ENCODE measurements at regions of chr1 and their contacts with region 1.

Region 1: DNA sequence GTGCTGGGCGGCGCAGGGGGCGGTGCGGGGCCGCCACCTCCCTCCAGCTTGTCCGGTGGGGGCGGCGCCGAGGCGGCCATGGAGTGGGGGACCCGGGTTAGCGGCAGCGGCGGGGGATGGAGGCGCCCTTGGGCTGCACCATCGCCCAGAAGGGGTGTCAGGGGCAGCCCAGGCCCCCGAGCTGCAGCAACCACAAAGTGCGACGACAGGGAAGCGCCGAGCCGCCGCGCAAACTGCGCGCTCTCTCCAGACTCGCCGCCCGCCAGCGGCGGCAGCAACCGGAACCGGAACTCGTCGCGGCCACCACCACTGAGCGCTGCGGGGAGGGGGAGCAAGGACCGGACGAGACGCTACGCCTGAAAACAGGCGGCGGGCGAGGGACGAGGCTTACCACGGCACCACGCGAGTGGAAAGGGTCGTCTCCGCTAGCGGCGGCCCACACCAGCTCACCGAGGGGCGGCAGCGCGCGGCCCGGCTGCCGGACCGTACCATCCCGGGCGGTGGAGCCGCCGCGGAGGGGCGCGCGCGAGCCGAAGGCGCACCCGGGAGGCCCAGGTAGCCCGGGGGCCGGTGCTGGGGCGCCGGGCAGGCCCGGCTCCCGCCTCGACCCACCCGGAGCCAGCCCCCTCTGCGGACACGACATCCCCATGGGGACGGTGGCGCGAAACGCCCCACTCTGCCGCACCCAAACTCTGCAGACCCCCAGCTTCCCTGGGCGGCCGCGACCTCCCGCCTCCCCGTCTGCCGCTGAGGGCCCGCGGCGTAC is at the start of gene PYGO2:
- DNase-seq: peak; percentile 81
- H3K4me3 ChIP-seq: peak within 1 kb of the TSS; percentile 71 to 78 (median 74)
- H3K27ac ChIP-seq: peak within 1 kb of the TSS; percentile 82
- H3K4me1 ChIP-seq: peaks cover 28% of the 10 kb centered on the region
- H3K27me3 ChIP-seq: no peaks in the 10 kb centered on the region
- CTCF ChIP-seq: peak; percentile 35 to 65
- POLR2A ChIP-seq: peak; percentile 84
- total RNA-seq, gene PYGO2: 21.5 and 21.9 TPM in 2 replicates

Region 2: GRCh38 chr1:154982897-154983648 is 21.4 kb after region 1 on chr1 and contains the start of gene FLAD1:
- CTCF ChIA-PET with region 1: interaction called, 4 read pairs
- POLR2A ChIA-PET with region 1: no interaction called
- dilution Hi-C with region 1: no loop called
- intact Hi-C with region 1: loop called (anchors 1 kb)
- DNase-seq: peak; percentile 100
- H3K4me3 ChIP-seq: peak within 1 kb of the TSS; percentile 67 to 98 (median 92)
- H3K27ac ChIP-seq: peak within 1 kb of the TSS; percentile 39
- H3K4me1 ChIP-seq: peaks cover 11% of the 10 kb centered on the region
- H3K27me3 ChIP-seq: no peaks in the 10 kb centered on the region
- CTCF ChIP-seq: no peak
- POLR2A ChIP-seq: peak; percentile 56
- total RNA-seq, gene FLAD1: 42.2 and 48.8 TPM in 2 replicates

Region 3: DNA sequence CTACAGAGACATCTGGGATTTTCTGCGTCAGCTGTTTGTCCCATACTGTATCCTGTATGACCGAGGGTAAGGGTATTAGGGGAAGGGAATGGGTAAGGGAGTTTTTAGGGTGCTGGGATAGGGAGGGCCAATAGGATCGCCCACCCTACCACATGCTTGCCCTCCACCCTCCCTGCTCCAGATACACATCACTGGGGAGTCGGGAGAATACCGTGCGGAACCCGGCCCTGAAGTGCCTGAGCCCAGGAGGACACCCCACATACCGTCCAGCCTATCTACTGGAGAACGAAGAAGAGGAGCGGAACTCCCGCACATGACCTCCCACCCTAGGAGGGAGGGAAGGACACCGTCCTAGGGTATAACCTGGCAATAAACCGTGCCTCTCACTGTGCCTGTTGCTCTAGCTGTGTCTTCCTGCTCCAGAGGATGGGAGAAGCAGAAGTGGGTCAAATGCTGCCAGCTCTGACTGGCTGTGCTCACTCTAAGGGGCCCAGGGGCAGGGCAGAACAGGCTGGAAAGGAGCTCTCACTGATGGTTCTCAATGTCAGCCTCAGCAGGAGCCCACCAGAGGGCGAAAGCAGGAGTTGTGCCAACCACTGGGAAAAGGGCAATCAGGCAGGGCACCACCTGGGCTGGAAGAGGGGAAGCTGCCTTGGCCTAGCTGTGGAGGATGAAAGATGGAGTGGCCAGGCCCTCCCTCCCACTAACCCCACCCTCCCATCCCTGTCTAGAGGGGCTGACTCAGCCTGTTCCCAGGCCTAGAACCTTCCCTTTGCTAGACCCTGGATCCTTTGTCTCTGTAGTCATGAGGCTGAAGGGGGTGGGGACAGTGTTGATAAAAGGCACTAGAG is 31.3 kb after region 1 on chr1:
- CTCF ChIA-PET with region 1: interaction called, 48 read pairs
- POLR2A ChIA-PET with region 1: no interaction called
- dilution Hi-C with region 1: no loop called
- intact Hi-C with region 1: no loop called
- DNase-seq: no peak
- H3K4me3 ChIP-seq: no peak overlapping the region
- H3K27ac ChIP-seq: no peak overlapping the region
- H3K4me1 ChIP-seq: peaks cover 2% of the 10 kb centered on the region
- H3K27me3 ChIP-seq: no peaks in the 10 kb centered on the region
- CTCF ChIP-seq: peak in 1 of 2 donors; percentile 40
- POLR2A ChIP-seq: no peak

Region 4: DNA sequence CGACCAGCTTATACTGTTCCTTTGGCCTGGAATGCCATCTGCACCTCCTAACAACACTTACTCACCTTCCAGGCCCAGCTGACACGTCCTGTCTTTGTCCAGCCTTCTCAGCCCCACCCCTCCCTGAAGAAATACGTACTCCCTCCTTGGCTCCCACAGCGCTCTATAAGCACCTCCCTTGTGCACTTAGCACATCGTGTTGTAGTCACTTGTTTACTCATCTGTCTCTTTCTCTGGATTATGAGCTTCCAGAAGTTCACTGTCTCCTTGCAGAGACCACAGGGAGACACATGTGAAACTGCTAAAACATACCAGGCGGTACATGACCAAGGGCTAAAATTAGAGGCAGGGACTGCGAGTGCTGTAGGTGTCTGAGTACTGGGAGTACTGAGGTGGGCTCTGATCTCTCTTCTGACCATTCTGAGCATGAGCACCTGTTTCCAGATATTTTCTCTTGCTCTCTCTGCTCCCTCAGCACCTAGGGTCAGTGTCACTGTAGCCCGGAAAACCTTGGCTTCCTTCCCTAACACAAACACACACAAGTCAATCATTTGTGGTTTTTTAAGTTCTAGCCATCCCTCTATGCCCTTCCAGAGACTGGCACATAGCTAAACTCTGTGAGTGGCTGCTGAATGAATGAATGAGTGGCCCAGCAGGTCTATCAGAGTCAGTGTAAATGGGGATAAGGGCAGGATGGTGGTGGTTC is 77.1 kb after region 1 on chr1:
- CTCF ChIA-PET with region 1: no interaction called
- POLR2A ChIA-PET with region 1: no interaction called
- dilution Hi-C with region 1: no loop called
- intact Hi-C with region 1: no loop called
- DNase-seq: no peak
- H3K4me3 ChIP-seq: no peak overlapping the region
- H3K27ac ChIP-seq: no peak overlapping the region
- H3K4me1 ChIP-seq: peaks cover 4% of the 10 kb centered on the region
- H3K27me3 ChIP-seq: peaks cover 0 to 5% of the 10 kb centered on the region in 2 experiments
- CTCF ChIP-seq: no peak
- POLR2A ChIP-seq: no peak

Region 5: DNA sequence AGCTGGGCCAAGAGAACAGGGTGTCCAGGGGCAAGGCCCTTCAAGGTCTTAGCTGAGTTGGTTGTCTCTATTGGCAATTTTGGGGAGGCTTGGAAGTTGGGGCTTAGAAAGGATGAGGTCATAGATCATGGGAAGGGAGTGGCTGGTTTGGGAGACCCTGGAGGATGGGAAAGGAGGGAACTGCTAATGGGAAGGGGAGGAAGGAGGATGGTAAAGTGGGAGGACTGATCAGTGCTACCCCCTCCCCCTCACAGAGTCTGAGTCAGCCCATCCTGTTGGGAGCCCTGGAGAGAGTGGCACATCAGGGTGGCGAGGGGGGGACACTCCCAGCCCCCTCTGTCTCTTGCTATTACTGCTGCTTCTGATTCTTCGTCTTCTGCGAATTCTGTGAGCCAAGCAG is 106.9 kb after region 1 on chr1:
- CTCF ChIA-PET with region 1: no interaction called
- POLR2A ChIA-PET with region 1: no interaction called
- dilution Hi-C with region 1: no loop called
- intact Hi-C with region 1: no loop called
- DNase-seq: no peak
- H3K4me3 ChIP-seq: no peak overlapping the region
- H3K27ac ChIP-seq: no peak overlapping the region
- H3K4me1 ChIP-seq: peaks cover 10% of the 10 kb centered on the region
- H3K27me3 ChIP-seq: no peaks in the 10 kb centered on the region
- CTCF ChIP-seq: no peak
- POLR2A ChIP-seq: no peak